Panc1 (cell line): ENCODE measurements at regions of chr15 and their contacts with region 1.

Region 1: DNA sequence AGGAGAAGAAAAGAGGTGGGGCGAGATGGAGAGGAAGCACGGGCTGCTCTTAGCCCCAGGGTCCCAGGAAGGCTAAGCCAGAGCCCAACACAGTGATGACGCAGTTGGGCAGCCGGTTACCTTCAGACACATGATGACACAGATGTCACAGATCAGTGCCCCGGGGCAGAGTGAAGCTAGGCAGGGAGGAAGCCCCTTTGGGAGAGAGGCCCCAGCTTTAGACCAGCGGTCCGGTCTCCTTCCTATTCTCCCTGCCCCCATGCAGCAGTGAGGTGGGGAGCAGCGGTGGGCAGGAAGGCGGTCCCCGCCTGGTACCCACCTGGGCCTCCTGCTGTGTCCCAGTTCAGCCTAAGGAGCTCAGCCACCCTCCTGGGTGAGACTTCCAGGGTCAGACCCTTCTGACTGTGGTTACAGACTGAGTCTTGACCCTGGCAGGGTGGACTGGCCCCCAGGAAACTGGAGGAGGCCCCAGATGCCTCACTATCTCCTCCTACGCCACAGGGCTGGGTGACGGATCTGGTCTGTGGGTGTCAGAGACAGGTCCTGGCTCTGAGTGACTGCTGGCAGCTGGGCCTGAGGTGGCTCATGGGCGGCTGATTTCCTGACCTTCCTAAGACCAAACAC is 38.8 kb upstream of the LINGO1 start:
- DNase-seq: no peak
- ATAC-seq: no peak
- H3K4me3 ChIP-seq: no peak overlapping the region
- H3K27ac ChIP-seq: no peak overlapping the region
- H3K4me1 ChIP-seq: no peaks in the 10 kb centered on the region
- H3K27me3 ChIP-seq: peaks cover 9% of the 10 kb centered on the region
- CTCF ChIP-seq: no peak

Region 2: DNA sequence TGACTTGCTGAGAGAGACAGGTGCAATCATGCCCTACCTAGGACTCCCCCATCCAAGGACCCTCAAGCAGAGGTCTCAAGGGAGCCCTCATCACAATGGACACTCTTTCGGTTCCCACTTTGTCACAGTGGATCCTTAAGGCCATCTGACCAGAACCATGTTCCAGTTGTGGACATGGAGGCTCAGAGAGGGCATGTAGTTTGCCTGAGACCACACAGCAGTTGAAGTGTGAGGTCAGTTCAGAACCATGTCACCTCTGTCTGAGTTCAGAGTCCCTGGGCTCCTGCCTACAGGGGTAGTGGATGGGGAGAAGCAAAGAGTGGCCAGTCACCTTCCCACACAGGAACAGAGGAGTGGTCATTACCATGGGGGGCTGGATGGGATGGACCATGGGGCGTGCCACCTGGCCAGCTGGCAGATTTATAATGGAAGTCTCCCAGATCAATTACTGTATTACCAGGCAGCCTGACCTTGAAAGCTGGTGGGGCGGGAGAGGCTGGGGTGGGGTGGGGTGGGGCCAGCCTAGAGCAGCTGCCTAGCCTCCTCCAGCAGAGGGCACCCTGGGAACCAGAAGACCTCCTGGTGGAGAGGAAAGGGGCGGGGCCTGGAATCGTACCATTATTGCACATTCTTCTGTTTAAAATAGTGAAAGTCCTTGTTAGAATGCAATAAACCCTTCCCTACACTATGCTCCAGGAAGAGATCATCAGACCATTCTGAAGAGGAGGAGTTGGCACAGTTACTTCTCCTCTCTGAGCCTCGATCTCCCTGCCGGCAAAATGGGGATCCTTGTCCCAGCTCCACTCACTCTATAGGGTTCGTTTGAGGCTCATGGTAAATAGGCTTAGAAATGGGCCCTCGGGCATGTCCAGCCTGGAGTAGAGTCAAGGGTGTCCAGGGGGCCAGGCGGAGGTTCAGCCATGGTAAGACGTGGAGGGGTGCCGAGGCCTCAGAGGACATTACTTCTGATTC is 11.8 kb before region 1 on chr15:
- CTCF ChIA-PET with region 1: no interaction called
- POLR2A ChIA-PET with region 1: interaction called, 13 read pairs
- in situ Hi-C with region 1: no loop called
- intact Hi-C with region 1: no loop called
- DNase-seq: no peak
- ATAC-seq: peak; percentile 80
- H3K4me3 ChIP-seq: no peak overlapping the region
- H3K27ac ChIP-seq: no peak overlapping the region
- H3K4me1 ChIP-seq: no peaks in the 10 kb centered on the region
- H3K27me3 ChIP-seq: no peaks in the 10 kb centered on the region
- CTCF ChIP-seq: peak; percentile 87; the same call in 1 of the 2 replicates

Region 3: DNA sequence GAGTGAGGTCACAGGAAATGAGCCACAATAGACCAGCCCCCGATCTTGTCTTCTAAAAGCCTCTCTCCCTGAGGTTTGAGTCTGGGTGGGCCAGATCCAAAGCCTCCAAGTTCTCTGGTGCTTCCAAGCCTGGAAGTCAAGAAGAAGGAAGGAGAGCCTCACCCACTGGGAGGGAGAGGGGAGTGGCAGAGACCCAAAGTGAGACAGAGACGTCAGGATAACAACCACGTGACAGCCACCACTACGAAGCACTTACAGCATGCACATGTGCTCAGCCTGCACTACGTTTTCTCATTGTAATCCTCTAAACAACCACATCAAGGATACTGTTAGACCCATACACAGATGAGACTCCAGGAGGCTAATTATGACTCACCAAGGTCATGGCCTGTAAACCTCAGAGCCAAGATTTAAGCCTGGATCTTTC is 158.6 kb after region 1 on chr15:
- CTCF ChIA-PET with region 1: no interaction called
- POLR2A ChIA-PET with region 1: no interaction called
- in situ Hi-C with region 1: no loop called
- intact Hi-C with region 1: no loop called
- DNase-seq: no peak
- ATAC-seq: peak; percentile 37; the same call in 1 of the 2 replicates
- H3K4me3 ChIP-seq: no peak overlapping the region
- H3K27ac ChIP-seq: no peak overlapping the region
- H3K4me1 ChIP-seq: no peaks in the 10 kb centered on the region
- H3K27me3 ChIP-seq: no peaks in the 10 kb centered on the region
- CTCF ChIP-seq: no peak